Upper lobe of right lung (tissue), 1 donor: ENCODE measurements at regions of chr6 and their contacts with region 1.

Region 1: DNA sequence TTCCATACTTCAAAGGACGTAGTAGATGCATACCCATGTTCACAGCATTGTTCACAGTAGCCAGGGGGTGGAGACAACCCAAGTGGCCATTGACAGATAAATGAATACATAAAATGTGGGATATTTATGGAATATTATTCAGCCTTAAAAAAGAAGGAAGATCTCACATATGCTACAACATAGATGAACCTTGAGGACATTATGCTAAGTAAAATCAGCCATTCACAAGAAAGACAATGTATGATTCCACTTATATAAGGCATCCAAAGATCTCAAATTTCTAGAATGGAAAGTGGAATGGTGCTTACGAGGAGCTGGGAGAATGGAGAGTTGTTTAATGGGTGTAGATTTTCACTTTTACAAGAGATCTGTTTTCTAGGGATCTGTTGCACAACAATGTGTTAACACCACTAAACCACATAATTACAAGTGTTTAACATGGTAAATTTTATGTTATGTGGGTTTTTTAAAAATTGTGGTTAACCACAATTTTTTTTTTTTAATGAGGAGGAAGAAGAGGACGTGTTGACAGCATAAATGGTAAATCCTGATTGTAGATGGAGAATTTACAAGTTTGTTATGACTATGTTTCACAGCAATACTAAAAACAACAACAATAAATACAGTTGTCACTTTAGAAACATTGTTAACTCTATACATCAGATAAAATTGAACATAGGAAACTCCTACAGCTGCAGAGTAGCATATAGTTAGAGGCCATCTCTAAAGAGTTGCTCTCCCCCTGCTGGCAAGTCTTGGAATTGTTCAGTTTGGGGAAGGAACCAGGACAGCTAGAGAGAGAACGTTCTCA is 41.6 kb downstream of the CCN2 start:
- DNase-seq: no peak
- ATAC-seq: peak; percentile 89
- H3K4me3 ChIP-seq: no peak overlapping the region
- H3K27ac ChIP-seq: no peak overlapping the region
- H3K4me1 ChIP-seq: no peaks in the 10 kb centered on the region
- H3K27me3 ChIP-seq: peaks cover 3% of the 10 kb centered on the region
- CTCF ChIP-seq: peak; percentile 95

Region 2: DNA sequence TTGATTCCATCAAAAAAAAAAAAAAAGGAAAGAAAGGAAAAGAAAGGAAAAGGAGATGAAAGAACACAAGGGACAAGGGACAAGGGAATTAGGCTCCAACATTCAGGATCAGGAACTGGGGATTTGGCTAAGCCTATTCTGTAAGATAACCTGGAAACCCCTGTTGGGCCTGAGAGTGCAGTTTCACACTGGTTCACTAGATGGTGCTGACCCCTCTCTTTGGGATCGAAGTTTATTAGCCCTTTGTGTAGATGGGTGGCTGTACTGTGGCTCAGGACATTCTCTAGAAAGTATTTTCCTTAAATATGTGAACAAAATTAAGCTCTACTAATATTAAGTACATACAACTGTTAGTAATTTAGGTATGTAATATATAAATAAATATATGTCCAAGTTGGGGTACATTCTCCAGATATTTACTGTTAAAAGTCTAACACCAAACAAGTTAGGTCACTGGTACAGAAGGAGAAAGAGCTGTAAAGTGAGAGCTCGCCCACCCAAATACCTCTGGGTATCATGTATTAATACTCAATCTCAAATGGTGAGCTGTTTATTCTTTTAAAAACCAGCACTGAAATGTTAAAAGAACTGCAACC is 214.7 kb before region 1 on chr6:
- intact Hi-C with region 1: loop called (anchors 10 kb)
- DNase-seq: no peak
- ATAC-seq: peak; percentile 88
- H3K4me3 ChIP-seq: no peak overlapping the region
- H3K27ac ChIP-seq: no peak overlapping the region
- H3K4me1 ChIP-seq: no peaks in the 10 kb centered on the region
- H3K27me3 ChIP-seq: no peaks in the 10 kb centered on the region
- CTCF ChIP-seq: peak; percentile 79